Right cardiac atrium (tissue), 5 donors: ENCODE measurements at regions of chr6 and their contacts with region 1.

Region 1: DNA sequence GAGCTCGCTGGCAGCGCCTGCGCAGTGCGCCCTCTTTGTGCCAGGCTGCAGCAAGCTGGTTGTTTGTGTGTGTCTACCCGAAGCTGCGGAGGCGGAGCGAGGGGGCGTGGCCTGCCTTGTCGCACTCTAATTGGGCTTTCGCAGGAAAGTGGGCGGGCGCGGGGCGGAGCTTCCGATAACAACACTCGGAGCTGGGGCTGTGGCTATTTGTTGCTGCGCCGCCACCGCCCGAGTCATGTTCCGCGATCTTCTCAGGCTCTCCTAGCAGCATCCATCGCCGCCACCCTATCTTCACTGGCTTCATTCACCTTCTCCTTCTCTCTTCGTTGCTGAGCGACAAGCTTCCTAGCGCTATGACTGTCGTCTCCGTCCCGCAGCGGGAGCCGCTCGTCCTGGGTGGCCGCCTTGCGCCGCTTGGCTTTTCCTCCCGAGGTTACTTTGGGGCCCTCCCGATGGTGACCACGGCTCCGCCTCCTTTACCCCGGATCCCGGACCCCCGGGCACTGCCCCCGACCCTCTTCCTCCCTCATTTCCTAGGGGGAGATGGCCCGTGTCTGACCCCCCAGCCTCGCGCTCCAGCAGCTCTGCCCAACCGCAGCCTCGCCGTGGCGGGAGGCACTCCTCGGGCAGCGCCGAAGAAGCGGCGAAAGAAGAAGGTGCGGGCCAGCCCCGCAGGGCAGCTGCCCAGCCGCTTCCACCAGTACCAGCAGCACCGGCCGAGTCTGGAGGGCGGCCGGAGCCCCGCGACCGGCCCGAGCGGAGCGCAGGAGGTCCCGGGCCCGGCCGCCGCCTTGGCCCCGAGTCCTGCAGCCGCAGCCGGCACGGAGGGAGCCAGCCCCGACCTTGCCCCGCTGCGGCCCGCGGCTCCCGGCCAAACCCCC is at the start of gene PNRC1:
- DNase-seq: peak; percentile 100
- ATAC-seq: peak; percentile 92 to 94
- H3K4me3 ChIP-seq: peak within 1 kb of the TSS; percentile 98
- H3K27ac ChIP-seq: peak within 1 kb of the TSS; percentile 100
- H3K4me1 ChIP-seq: no peaks in the 10 kb centered on the region
- H3K27me3 ChIP-seq: no peaks in the 10 kb centered on the region
- total RNA-seq, gene PNRC1: 200 to 225 (median 213) TPM

Region 2: GRCh38 chr6:88963139-88964090 is 117.4 kb before region 1 on chr6 and contains the start of gene RNGTT:
- intact Hi-C with region 1: loop called in 1 of 4 experiments (anchors 10 kb)
- DNase-seq: peak; percentile 99 to 100 (median 100)
- ATAC-seq: peak; percentile 100
- H3K4me3 ChIP-seq: peak within 1 kb of the TSS; percentile 75
- H3K27ac ChIP-seq: peak within 1 kb of the TSS; percentile 92
- H3K4me1 ChIP-seq: peaks cover 2% of the 10 kb centered on the region
- H3K27me3 ChIP-seq: no peaks in the 10 kb centered on the region
- total RNA-seq, gene RNGTT: 8.1 to 9.5 (median 8.7) TPM

Region 3: GRCh38 chr6:89035252-89036106 is 45.3 kb before region 1 on chr6:
- intact Hi-C with region 1: loop called in 3 of 4 experiments (anchors 5 kb)
- DNase-seq: peak; percentile 85 to 94 (median 93)
- ATAC-seq: peak; percentile 96
- H3K4me3 ChIP-seq: no peak overlapping the region
- H3K27ac ChIP-seq: peak overlapping the region; percentile 96
- H3K4me1 ChIP-seq: peaks cover 5% of the 10 kb centered on the region
- H3K27me3 ChIP-seq: no peaks in the 10 kb centered on the region

Region 4: DNA sequence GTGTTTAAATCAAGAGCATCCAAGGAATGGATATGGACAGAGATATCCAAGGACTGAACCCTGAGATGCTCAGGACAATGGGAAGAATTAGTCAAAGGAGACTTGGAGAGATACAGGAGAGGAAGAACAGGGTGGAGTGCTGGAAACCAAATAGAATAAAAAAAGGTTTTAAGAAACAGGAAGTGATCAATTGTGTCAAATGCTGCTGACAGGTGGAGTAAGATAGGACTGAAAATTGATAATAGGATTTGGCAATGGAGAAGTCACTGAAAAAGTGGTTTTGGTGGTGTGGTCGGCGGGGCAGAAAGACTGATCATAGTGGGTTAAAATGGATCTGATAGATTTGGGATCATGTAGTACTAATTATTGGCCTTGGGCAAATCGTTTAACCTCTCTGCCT is 38.1 kb before region 1 on chr6:
- intact Hi-C with region 1: loop called in 3 of 4 experiments (anchors 5 kb)
- DNase-seq: no peak
- ATAC-seq: no peak
- H3K4me3 ChIP-seq: no peak overlapping the region
- H3K27ac ChIP-seq: no peak overlapping the region
- H3K4me1 ChIP-seq: no peaks in the 10 kb centered on the region
- H3K27me3 ChIP-seq: no peaks in the 10 kb centered on the region

Region 5: DNA sequence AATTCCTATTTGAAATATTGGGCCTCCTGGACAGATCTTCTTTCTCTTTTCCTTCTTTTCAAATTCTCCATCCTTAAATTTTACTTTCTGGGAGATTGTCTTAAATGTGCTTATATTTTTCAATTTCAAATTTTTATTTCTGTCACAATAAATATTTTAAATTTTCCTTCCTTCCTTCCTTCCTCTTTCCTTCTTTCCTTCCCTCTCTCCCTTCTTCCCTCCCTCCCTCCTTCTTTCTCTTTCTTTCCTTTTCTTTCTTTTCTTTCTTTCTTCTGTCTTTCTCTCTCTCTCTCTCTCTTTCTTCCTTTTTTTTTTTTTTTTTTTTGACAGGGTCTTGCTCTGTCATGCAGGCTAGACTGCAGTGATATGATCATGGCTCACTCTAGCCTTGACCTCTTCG is 16.9 kb before region 1 on chr6:
- intact Hi-C with region 1: loop called in 1 of 4 experiments (anchors 2 kb)
- DNase-seq: no peak
- ATAC-seq: no peak
- H3K4me3 ChIP-seq: no peak overlapping the region
- H3K27ac ChIP-seq: no peak overlapping the region
- H3K4me1 ChIP-seq: no peaks in the 10 kb centered on the region
- H3K27me3 ChIP-seq: no peaks in the 10 kb centered on the region